Adrenal gland (tissue), 19 donors: ENCODE measurements at regions of chr7 and their contacts with region 1.

Region 1: GRCh38 chr7:27921081-27921836 is 181.3 kb downstream of the TAX1BP1 start:
- DNase-seq: peak; percentile 53 to 73 (median 66)
- H3K4me3 ChIP-seq: no peak overlapping the region
- H3K27ac ChIP-seq: peak overlapping the region in 1 of 5 donors; percentile 11
- H3K4me1 ChIP-seq: peaks cover 0 to 6% of the 10 kb centered on the region in 2 donors
- H3K27me3 ChIP-seq: no peaks in the 10 kb centered on the region
- CTCF ChIP-seq: peak in 5 of 6 experiments; percentile 64 to 89 (median 67)
- POLR2A ChIP-seq: peak in 1 of 2 donors; percentile 58

Region 2: GRCh38 chr7:28017372-28017771 is 96.1 kb after region 1 on chr7:
- intact Hi-C with region 1: loop called in 1 of 2 experiments (anchors 10 kb)
- DNase-seq: peak in 1 of 7 donors; percentile 38
- H3K4me3 ChIP-seq: no peak overlapping the region
- H3K27ac ChIP-seq: no peak overlapping the region
- H3K4me1 ChIP-seq: peaks cover 0 to 5% of the 10 kb centered on the region in 2 donors
- H3K27me3 ChIP-seq: no peaks in the 10 kb centered on the region
- CTCF ChIP-seq: no peak
- POLR2A ChIP-seq: no peak